ENCODE measurements at regions of chr20 and their contacts with region 1.

Region 1: GRCh38 chr20:5078399-5078958 is 41.3 kb downstream of the PCNA start:
- DNase-seq: peak; percentile 95
- H3K4me3 Mint-ChIP-seq: peak overlapping the region; percentile 80
- H3K27ac Mint-ChIP-seq: peak overlapping the region; percentile 94
- H3K4me1 Mint-ChIP-seq: peaks cover 50% of the 10 kb centered on the region
- H3K27me3 Mint-ChIP-seq: no peaks in the 10 kb centered on the region

Region 2: DNA sequence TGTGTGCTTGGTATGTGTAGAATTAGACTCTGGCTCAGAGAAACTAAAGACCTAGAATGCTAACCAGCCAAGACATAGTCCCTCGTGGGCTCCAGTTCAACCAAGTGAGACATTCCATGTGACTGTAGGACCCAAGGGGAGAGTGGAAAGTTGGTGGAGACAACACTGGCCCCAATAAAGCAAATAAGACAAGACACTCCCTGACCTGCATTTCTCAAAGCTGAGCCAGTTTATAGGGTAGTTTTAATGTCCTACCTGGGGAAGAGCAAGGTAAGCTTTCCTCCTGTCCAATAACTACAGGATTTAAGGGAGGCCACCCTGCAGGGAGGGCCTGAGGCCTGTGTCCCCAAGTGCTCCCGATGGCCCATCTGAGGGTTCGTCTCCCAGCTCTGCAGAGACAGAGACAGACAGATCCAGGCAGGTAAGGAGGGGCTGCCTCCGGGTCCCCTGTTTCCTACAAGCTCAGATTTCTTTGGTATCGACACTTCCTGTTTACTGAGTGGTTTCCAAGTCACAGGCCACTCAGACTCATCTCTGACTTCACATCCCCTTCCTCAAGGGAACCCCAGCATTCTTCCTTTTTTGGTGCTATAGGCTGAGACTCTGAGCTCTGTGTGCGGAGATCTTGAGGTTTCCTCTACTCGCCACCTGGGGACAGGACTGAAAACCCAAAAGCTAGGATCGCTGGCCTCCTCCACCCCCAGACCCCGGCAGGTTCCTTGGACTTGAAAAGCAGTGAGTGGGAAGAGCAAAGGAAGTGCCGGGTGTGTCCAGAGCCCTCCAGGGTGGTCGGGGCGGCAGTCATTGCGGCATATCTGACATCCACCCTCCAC is 264.4 kb before region 1 on chr20:
- intact Hi-C with region 1: loop called (anchors 1 kb)
- DNase-seq: peak; percentile 93
- H3K4me3 Mint-ChIP-seq: peak overlapping the region; percentile 87
- H3K27ac Mint-ChIP-seq: peak overlapping the region; percentile 96
- H3K4me1 Mint-ChIP-seq: peaks cover 69% of the 10 kb centered on the region
- H3K27me3 Mint-ChIP-seq: no peaks in the 10 kb centered on the region

Region 3: GRCh38 chr20:4961746-4962145 is 116.7 kb before region 1 on chr20:
- intact Hi-C with region 1: loop called (anchors 5 kb)
- DNase-seq: peak; percentile 72
- H3K4me3 Mint-ChIP-seq: peak overlapping the region; percentile 54
- H3K27ac Mint-ChIP-seq: peak overlapping the region; percentile 90
- H3K4me1 Mint-ChIP-seq: peaks cover 16% of the 10 kb centered on the region
- H3K27me3 Mint-ChIP-seq: no peaks in the 10 kb centered on the region

Region 4: DNA sequence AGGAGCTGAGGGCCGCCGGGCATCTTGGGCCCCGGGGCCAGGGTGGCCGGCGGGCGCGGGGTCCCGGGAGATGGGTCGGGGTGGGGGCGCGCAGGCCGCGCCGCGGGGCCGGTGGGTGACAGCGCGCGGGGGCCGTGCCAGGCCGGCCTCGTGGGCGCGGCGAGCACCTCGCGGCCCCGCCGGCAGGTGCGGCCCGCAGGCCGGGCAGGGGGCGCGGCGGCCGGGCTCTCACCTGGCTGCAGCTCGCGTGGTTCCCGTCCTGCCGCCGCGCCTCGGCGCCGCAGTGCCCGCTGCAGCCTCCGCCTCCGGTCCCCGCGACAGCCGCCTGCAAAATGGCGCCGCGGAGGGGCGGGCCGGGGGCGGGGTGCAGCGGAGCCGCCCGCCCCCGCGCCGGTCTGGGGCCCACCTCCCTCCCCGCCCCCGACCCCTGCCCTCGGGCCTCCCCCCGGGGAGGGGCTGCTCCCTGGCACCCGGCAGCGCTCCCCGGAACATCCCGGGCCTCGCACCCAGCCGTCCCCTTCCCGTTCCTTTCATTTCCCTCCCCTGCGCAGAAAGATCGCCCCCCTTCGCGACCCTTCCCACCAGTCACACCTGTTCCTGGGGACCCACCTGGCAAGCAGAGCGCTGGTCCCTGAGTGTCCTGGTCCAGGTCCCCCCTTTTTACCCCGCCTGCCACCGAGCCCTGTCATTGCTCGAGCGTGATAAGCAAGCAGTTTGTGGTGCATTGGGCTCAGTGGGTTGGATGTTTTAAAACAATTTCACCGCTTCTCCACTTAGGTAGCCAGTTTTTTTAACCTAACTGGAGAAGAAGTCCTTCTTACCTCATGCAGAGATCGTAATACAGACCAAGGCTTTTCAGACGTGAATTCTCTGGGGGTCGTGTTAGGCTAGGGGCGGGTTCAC is 77.1 kb before region 1 on chr20 and contains the start of gene SLC23A2:
- intact Hi-C with region 1: loop called (anchors 1 kb)
- DNase-seq: peak; percentile 88
- H3K4me3 Mint-ChIP-seq: peak within 1 kb of the TSS; percentile 98
- H3K27ac Mint-ChIP-seq: peak within 1 kb of the TSS; percentile 96
- H3K4me1 Mint-ChIP-seq: peaks cover 35% of the 10 kb centered on the region
- H3K27me3 Mint-ChIP-seq: peaks cover 19% of the 10 kb centered on the region
- total RNA-seq, gene SLC23A2: 26.9 and 27.6 TPM in 2 replicates

Region 5: GRCh38 chr20:6295127-6295866 is 1216.8 kb after region 1 on chr20:
- intact Hi-C with region 1: no loop called
- DNase-seq: no peak
- H3K4me3 Mint-ChIP-seq: no peak overlapping the region
- H3K27ac Mint-ChIP-seq: no peak overlapping the region
- H3K4me1 Mint-ChIP-seq: no peaks in the 10 kb centered on the region
- H3K27me3 Mint-ChIP-seq: no peaks in the 10 kb centered on the region

Measured in activated CD4-positive, alpha-beta T cell treated with anti-CD3 and anti-CD28 coated beads, Interleukin-2, amount 10 ng/mL, durations not matched to agents 24 days and 14 days (primary cell).